Gastrocnemius medialis (tissue), 4 donors: ENCODE measurements at regions of chr3 and their contacts with region 1.

Region 1: GRCh38 chr3:149180057-149180573 is 41.5 kb downstream of the CP start:
- DNase-seq: peak; percentile 94 to 97
- ATAC-seq: peak; percentile 99
- H3K4me3 ChIP-seq: no peak overlapping the region
- H3K27ac ChIP-seq: peak overlapping the region; percentile 81 to 84 (median 82)
- H3K4me1 ChIP-seq: peaks cover 16 to 21% of the 10 kb centered on the region in 2 donors
- H3K27me3 ChIP-seq: no peaks in the 10 kb centered on the region
- CTCF ChIP-seq: no peak
- POLR2A ChIP-seq: peak in 1 of 2 donors; percentile 25

Region 2: GRCh38 chr3:149129326-149130205 is 50.5 kb before region 1 on chr3 and contains the start of gene HPS3:
- in situ Hi-C with region 1: no loop called
- intact Hi-C with region 1: loop called (anchors 1 kb)
- DNase-seq: peak; percentile 83 to 85
- ATAC-seq: peak; percentile 91 to 95
- H3K4me3 ChIP-seq: peak within 1 kb of the TSS; percentile 68 to 82 (median 76)
- H3K27ac ChIP-seq: peak within 1 kb of the TSS; percentile 74 to 79 (median 74)
- H3K4me1 ChIP-seq: peaks cover 17 to 22% of the 10 kb centered on the region in 2 donors
- H3K27me3 ChIP-seq: no peaks in the 10 kb centered on the region
- CTCF ChIP-seq: peak in 2 of 5 experiments; percentile 19 to 28
- POLR2A ChIP-seq: peak; percentile 82 to 97
- total RNA-seq, gene HPS3: 3.1 to 5.5 (median 4.4) TPM

Region 3: GRCh38 chr3:149224736-149225594 is 44.9 kb after region 1 on chr3:
- in situ Hi-C with region 1: no loop called
- intact Hi-C with region 1: loop called (anchors 5 kb)
- DNase-seq: no peak
- ATAC-seq: peak; percentile 90 to 93
- H3K4me3 ChIP-seq: peak overlapping the region; percentile 28 to 52 (median 36)
- H3K27ac ChIP-seq: peak overlapping the region; percentile 59 to 72 (median 66)
- H3K4me1 ChIP-seq: no peaks in the 10 kb centered on the region
- H3K27me3 ChIP-seq: no peaks in the 10 kb centered on the region
- CTCF ChIP-seq: no peak
- POLR2A ChIP-seq: peak in 1 of 2 donors; percentile 19